Left ventricle myocardium inferior (tissue), 1 donor: ENCODE measurements at regions of chr2 and their contacts with region 1.

Region 1: DNA sequence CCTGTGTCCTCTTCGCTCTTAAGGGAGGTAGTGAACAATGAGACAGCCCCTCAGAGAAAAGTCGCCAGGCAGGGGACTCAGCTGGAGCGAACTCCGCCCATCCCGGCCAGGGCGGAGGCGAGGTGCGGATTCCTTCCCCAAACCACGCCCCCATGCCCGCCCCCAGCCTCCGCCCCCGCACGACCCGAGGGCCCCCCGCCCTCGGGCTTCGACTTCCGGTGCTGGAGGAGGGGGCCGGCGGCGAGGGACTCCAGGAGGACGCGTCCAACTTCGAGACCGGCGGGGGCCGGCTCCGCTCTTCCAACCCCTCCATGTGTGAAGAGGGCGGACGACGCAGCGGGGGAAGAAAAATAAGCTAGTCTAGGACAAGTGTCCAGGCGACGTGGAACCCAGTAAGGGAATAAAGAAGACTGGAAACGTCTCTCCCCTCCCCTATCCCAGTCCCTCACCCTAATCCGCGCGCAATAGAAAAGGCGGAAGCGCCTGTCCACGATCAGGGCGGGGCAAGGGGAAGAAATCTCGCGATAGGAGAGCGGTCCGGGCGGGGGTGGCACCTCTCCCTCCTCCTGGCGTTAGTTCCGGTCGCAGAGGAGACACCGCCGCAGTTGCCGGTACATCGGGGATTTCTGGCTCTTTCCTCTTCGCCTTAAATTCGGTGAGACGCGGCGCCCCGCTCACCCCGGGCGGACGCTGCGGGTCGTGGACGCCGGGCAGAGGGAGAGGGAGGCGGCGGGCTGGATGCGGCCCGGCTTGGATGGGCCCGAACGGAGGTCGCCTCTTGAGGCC is at the start of gene BZW1:
- DNase-seq: peak; percentile 94
- H3K4me3 ChIP-seq: peak within 1 kb of the TSS; percentile 95
- H3K27ac ChIP-seq: peak within 1 kb of the TSS; percentile 98
- H3K4me1 ChIP-seq: peaks cover 49% of the 10 kb centered on the region
- H3K27me3 ChIP-seq: no peaks in the 10 kb centered on the region
- CTCF ChIP-seq: no peak
- total RNA-seq, gene BZW1: 63.2 TPM

Region 2: GRCh38 chr2:200702646-200703118 is 108.8 kb before region 1 on chr2:
- intact Hi-C with region 1: no loop called
- DNase-seq: no peak
- H3K4me3 ChIP-seq: no peak overlapping the region
- H3K27ac ChIP-seq: no peak overlapping the region
- H3K4me1 ChIP-seq: peaks cover 8% of the 10 kb centered on the region
- H3K27me3 ChIP-seq: no peaks in the 10 kb centered on the region
- CTCF ChIP-seq: no peak

Region 3: DNA sequence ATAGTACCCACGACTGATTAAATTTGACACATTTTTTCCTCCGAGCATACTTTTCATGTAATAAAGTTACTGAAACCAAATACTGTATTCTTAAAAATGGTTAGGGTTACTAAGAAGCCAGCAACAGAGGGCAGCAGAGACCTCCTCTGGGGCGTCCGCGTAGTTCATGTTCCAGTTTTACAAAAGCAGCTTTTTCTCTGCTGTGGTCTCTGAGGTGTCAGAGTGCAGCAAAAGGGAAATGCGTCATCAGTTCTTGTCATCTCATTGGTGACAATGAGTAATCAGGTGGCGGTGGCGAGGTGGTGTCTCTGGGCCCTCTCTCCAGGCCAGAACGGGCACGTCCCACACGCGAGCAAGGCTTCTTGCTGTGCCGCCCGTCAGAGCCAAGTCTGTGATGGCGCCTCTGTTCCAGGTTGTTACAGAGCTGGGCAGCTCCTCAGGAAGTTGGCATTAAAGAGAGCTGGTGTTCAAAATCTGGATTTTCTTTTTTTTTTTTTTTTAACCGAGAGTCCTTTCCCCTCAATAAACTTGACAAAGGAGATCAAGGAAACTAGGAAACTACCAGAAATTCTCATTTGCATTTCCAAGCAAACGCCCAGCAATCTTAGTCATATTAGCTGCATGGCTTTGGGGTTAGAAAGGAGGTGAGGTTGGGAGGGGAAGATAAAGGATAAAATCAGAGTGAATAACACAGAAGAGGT is 98.4 kb before region 1 on chr2:
- intact Hi-C with region 1: loop called (anchors 5 kb)
- DNase-seq: peak; percentile 78
- H3K4me3 ChIP-seq: peak overlapping the region; percentile 58
- H3K27ac ChIP-seq: peak overlapping the region; percentile 62
- H3K4me1 ChIP-seq: peaks cover 6% of the 10 kb centered on the region
- H3K27me3 ChIP-seq: no peaks in the 10 kb centered on the region
- CTCF ChIP-seq: peak; percentile 91

Region 4: DNA sequence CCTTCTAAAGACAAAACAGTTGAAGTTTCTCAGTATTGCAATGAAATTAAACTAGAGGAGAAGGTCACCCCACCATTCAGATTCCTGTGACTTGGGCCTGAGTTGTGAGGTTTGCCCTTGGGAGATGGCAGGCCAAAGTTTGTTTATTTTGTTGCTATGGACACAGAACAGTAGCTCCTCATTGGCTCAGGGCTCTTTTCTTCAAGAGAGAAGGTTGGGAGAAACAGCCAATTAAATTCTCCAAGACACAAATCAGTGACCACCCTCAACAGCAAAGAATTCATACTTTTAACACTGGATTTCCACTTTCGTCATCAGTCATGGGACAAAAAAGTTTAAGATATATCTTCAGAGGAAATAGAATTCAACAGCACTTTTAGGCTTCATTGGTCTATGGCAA is 545.7 kb after region 1 on chr2 and contains the start of gene FLACC1:
- intact Hi-C with region 1: no loop called
- DNase-seq: no peak
- H3K4me3 ChIP-seq: peak within 1 kb of the TSS; percentile 52
- H3K27ac ChIP-seq: peak within 1 kb of the TSS; percentile 84
- H3K4me1 ChIP-seq: peaks cover 26% of the 10 kb centered on the region
- H3K27me3 ChIP-seq: no peaks in the 10 kb centered on the region
- CTCF ChIP-seq: no peak
- total RNA-seq, gene FLACC1: 11.8 TPM